ENCODE measurements at regions of chr10 and their contacts with region 1.

Region 1: DNA sequence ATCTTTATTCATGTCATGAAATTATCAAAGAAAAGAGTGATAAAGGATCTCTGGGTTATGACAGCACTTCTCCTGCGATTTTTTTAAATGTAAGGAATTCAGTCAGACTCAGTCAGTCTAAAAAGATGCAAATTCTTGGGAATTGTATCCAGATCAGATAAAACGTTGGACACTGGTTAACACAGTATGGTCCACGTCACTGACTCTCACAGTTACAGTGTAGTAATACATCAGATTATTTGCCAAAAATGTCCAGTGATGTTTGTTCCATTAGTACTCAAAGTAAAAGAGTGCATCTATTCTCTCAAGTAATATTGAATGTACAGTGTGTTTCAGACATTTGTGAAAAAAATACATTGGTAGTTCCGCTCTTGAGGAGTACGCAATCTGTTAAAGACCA is 224.5 kb downstream of the PCDH15 start:
- DNase-seq: no peak
- ATAC-seq: no peak
- H3K4me3 ChIP-seq: no peak overlapping the region
- H3K4me3 Mint-ChIP-seq: no peak overlapping the region
- H3K27ac ChIP-seq: no peak overlapping the region
- H3K27ac Mint-ChIP-seq: no peak overlapping the region
- H3K4me1 ChIP-seq: no peaks in the 10 kb centered on the region
- H3K4me1 Mint-ChIP-seq: no peaks in the 10 kb centered on the region
- H3K27me3 ChIP-seq: no peaks in the 10 kb centered on the region
- H3K27me3 Mint-ChIP-seq: no peaks in the 10 kb centered on the region
- CTCF ChIP-seq: no peak

Region 2: GRCh38 chr10:54415483-54415882 is 161.1 kb before region 1 on chr10:
- CTCF ChIA-PET with region 1: no interaction called
- POLR2A ChIA-PET with region 1: no interaction called
- intact Hi-C with region 1: loop called (anchors 5 kb)
- DNase-seq: no peak
- ATAC-seq: no peak
- H3K4me3 ChIP-seq: no peak overlapping the region
- H3K4me3 Mint-ChIP-seq: no peak overlapping the region
- H3K27ac ChIP-seq: no peak overlapping the region
- H3K27ac Mint-ChIP-seq: no peak overlapping the region
- H3K4me1 ChIP-seq: no peaks in the 10 kb centered on the region
- H3K4me1 Mint-ChIP-seq: no peaks in the 10 kb centered on the region
- H3K27me3 ChIP-seq: no peaks in the 10 kb centered on the region
- H3K27me3 Mint-ChIP-seq: no peaks in the 10 kb centered on the region
- CTCF ChIP-seq: no peak

Region 3: GRCh38 chr10:54614072-54614471 is 37.5 kb after region 1 on chr10:
- CTCF ChIA-PET with region 1: no interaction called
- POLR2A ChIA-PET with region 1: no interaction called
- intact Hi-C with region 1: no loop called
- DNase-seq: no peak
- ATAC-seq: no peak
- H3K4me3 ChIP-seq: no peak overlapping the region
- H3K4me3 Mint-ChIP-seq: no peak overlapping the region
- H3K27ac ChIP-seq: no peak overlapping the region
- H3K27ac Mint-ChIP-seq: no peak overlapping the region
- H3K4me1 ChIP-seq: no peaks in the 10 kb centered on the region
- H3K4me1 Mint-ChIP-seq: no peaks in the 10 kb centered on the region
- H3K27me3 ChIP-seq: no peaks in the 10 kb centered on the region
- H3K27me3 Mint-ChIP-seq: no peaks in the 10 kb centered on the region
- CTCF ChIP-seq: no peak